Psoas muscle (tissue), 8 donors: ENCODE measurements at regions of chr10 and their contacts with region 1.

Region 1: GRCh38 chr10:23525406-23525805 is 86.5 kb downstream of the OTUD1 start:
- DNase-seq: no peak
- ATAC-seq: peak; percentile 80 to 90 (median 85)
- H3K4me3 ChIP-seq: no peak overlapping the region
- H3K27ac ChIP-seq: no peak overlapping the region
- H3K4me1 ChIP-seq: no peaks in the 10 kb centered on the region
- H3K27me3 ChIP-seq: no peaks in the 10 kb centered on the region
- CTCF ChIP-seq: peak; percentile 67

Region 2: DNA sequence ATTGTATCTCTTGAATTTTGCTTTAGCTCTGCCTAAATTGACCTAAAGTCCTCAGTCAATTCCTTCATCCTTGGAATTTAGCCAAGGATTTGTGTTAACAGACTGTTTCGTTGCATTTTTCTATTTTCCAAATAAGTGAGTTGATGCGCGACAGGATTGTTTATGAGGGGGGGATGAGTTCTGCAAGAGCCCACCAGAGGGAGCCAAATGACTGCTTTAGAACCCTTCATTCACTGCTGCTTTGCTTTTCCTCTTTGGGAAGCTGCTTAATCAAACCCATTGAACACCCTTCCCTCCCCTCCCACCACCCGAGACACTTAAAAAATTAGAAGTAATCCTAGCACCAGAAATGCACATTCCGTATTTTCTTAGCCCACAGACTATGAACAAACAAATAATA is 367.0 kb before region 1 on chr10:
- intact Hi-C with region 1: loop called (anchors 5 to 10 kb)
- DNase-seq: no peak
- ATAC-seq: peak; percentile 67 to 80 (median 70)
- H3K4me3 ChIP-seq: no peak overlapping the region
- H3K27ac ChIP-seq: no peak overlapping the region
- H3K4me1 ChIP-seq: peaks cover 3% of the 10 kb centered on the region
- H3K27me3 ChIP-seq: peaks cover 0 to 13% (median 0%) of the 10 kb centered on the region in 3 donors
- CTCF ChIP-seq: peak; percentile 75

Region 3: GRCh38 chr10:23314835-23315239 is 210.6 kb before region 1 on chr10:
- intact Hi-C with region 1: loop called (anchors 2 kb)
- DNase-seq: no peak
- ATAC-seq: peak; percentile 65 to 86 (median 72)
- H3K4me3 ChIP-seq: no peak overlapping the region
- H3K27ac ChIP-seq: no peak overlapping the region
- H3K4me1 ChIP-seq: no peaks in the 10 kb centered on the region
- H3K27me3 ChIP-seq: no peaks in the 10 kb centered on the region
- CTCF ChIP-seq: peak; percentile 81

Region 4: GRCh38 chr10:23702977-23703414 is 177.6 kb after region 1 on chr10:
- intact Hi-C with region 1: loop called in 1 of 2 experiments (anchors 10 kb)
- DNase-seq: peak in 1 of 2 donors; percentile 16
- ATAC-seq: peak; percentile 53 to 69 (median 64)
- H3K4me3 ChIP-seq: no peak overlapping the region
- H3K27ac ChIP-seq: no peak overlapping the region
- H3K4me1 ChIP-seq: no peaks in the 10 kb centered on the region
- H3K27me3 ChIP-seq: no peaks in the 10 kb centered on the region
- CTCF ChIP-seq: peak; percentile 68

Region 5: DNA sequence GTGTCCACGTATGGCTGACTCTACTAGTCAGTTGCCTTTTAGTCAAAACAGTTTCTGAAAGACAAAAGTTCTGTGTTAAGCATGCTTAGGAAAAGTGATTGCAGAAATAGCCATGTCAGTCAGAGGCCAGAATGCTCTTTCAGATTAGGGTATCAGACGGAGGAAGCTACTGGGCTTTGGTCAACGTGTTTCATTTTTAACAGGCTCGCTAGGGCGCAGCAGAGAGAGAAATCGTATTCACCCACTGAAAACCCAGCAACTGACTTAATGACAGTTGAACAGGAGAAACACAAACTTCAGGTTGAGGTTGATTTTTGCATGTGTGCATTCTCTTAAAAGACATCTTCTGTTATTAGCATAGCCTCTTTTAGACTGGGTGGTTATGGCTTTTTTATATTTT is 360.9 kb after region 1 on chr10:
- intact Hi-C with region 1: no loop called
- DNase-seq: no peak
- ATAC-seq: no peak
- H3K4me3 ChIP-seq: no peak overlapping the region
- H3K27ac ChIP-seq: no peak overlapping the region
- H3K4me1 ChIP-seq: no peaks in the 10 kb centered on the region
- H3K27me3 ChIP-seq: no peaks in the 10 kb centered on the region
- CTCF ChIP-seq: peak; percentile 9

Region 6: GRCh38 chr10:24556750-24557742 is 1031.6 kb after region 1 on chr10:
- intact Hi-C with region 1: loop called in 1 of 2 experiments (anchors 10 kb)
- DNase-seq: no peak
- ATAC-seq: peak in 3 of 4 donors; percentile 51 to 58 (median 54)
- H3K4me3 ChIP-seq: no peak overlapping the region
- H3K27ac ChIP-seq: no peak overlapping the region
- H3K4me1 ChIP-seq: peaks cover 22% of the 10 kb centered on the region
- H3K27me3 ChIP-seq: no peaks in the 10 kb centered on the region
- CTCF ChIP-seq: peak; percentile 78